ENCODE measurements at regions of chr17 and their contacts with region 1.

Region 1: GRCh38 chr17:75364078-75364477 is 41.4 kb downstream of the GRB2 start:
- DNase-seq: peak; percentile 54
- H3K4me3 ChIP-seq: no peak overlapping the region
- CTCF ChIP-seq: no peak

Region 2: DNA sequence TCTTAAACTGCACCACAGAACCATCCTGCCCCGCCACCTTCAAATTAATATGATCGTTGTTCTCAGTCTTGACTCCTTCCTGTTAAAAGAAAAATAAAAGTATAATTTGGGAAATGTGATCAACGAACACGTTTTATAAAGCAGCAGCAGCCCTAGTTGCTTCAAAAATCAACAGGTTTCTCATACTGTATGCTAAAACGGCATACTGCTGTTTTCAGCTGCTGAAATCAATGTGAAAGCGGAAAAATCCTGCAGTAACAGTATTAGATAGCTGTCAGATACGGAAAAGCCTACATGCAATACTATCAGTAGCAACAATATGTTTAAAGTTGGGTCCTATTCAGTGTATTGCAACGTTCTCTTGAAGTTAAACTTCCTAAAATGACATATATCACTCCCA is 183.0 kb before region 1 on chr17:
- CTCF ChIA-PET with region 1: no interaction called
- POLR2A ChIA-PET with region 1: no interaction called
- DNase-seq: no peak
- H3K4me3 ChIP-seq: peak overlapping the region; percentile 93
- CTCF ChIP-seq: no peak

Region 3: GRCh38 chr17:75346906-75347305 is 17.2 kb before region 1 on chr17:
- CTCF ChIA-PET with region 1: interaction called, 11 read pairs
- POLR2A ChIA-PET with region 1: no interaction called
- DNase-seq: no peak
- H3K4me3 ChIP-seq: no peak overlapping the region
- CTCF ChIP-seq: no peak

Region 4: GRCh38 chr17:75405365-75406221 is 41.5 kb after region 1 on chr17 and contains the start of gene GRB2:
- CTCF ChIA-PET with region 1: no interaction called
- POLR2A ChIA-PET with region 1: no interaction called
- DNase-seq: no peak
- H3K4me3 ChIP-seq: peak within 1 kb of the TSS; percentile 93
- CTCF ChIP-seq: no peak

Measured in AG04449 (cell line).